ENCODE measurements at regions of chr2 and their contacts with region 1.

Region 1: DNA sequence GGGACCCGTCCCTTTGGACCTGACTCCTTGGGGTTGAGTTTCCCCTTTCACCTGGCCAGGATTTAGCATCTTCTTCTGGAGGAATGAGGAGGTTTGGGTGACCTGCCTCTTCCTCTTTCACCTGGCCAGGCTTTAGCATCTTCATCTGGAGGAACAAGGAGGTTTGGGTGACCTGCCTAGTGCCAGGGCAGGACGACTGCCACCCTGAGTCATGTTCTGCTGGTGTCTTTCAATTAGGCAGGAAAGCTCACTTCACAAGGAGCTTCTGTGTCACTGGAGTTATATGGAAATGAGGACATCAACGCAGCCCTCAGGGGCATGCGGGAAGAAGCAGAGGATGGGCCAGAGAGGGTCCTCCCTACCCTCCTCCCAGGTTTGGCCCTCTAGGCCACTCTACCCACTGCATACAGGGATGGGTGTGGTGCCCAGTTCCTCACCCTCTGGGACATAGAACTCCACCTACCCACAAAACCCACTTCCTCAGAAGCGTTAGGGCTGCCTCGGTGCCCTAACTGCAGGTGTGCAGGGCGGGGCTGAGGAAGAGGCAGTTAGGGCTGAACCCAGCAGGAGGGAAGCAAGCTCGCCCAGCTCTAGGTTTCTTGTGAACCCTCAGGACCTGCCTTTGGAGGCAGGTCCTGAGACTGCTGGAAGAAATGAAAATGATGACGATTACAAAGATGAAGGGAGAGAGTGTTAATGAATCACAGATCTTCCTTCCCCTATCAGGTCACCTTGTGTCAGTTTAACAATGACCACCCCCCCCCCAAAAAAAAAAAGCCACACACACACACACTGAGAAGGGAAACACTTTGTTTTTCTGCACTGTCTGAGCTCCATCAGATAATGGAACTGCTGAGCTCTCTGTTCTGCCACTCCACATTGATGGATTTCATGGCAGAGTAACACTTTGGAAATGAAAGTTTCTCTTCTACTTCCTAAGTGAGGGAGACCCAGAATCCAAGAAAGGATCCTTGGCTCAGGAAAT is 71.0 kb downstream of the ARL4C start:
- DNase-seq: peak; percentile 61 to 73 (median 72)
- H3K4me3 ChIP-seq: peak overlapping the region in 1 of 3 experiments; percentile 25
- H3K4me3 Mint-ChIP-seq: peak overlapping the region; percentile 12 to 59
- H3K27ac ChIP-seq: peak overlapping the region; percentile 91 to 92
- H3K27ac Mint-ChIP-seq: peak overlapping the region; percentile 92 to 98 (median 95)
- H3K4me1 ChIP-seq: peaks cover 62 to 72% of the 10 kb centered on the region in 2 donors
- H3K4me1 Mint-ChIP-seq: peaks cover 64% of the 10 kb centered on the region
- H3K27me3 ChIP-seq: no peaks in the 10 kb centered on the region
- H3K27me3 Mint-ChIP-seq: peaks cover 0 to 5% (median 1%) of the 10 kb centered on the region in 3 donors
- CTCF ChIP-seq: no peak

Region 2: GRCh38 chr2:234288974-234289455 is 136.9 kb before region 1 on chr2:
- intact Hi-C with region 1: loop called (anchors 5 kb)
- DNase-seq: peak; percentile 86 to 92 (median 87)
- H3K4me3 ChIP-seq: no peak overlapping the region
- H3K4me3 Mint-ChIP-seq: peak overlapping the region in 1 of 2 donors; percentile 51
- H3K27ac ChIP-seq: peak overlapping the region in 1 of 2 donors; percentile 93
- H3K27ac Mint-ChIP-seq: peak overlapping the region in 6 of 7 donors; percentile 80 to 98 (median 95)
- H3K4me1 ChIP-seq: peaks cover 40 to 45% of the 10 kb centered on the region in 2 donors
- H3K4me1 Mint-ChIP-seq: peaks cover 49% of the 10 kb centered on the region
- H3K27me3 ChIP-seq: no peaks in the 10 kb centered on the region
- H3K27me3 Mint-ChIP-seq: peaks cover 3 to 11% (median 5%) of the 10 kb centered on the region in 3 donors
- CTCF ChIP-seq: peak; percentile 91

Region 3: DNA sequence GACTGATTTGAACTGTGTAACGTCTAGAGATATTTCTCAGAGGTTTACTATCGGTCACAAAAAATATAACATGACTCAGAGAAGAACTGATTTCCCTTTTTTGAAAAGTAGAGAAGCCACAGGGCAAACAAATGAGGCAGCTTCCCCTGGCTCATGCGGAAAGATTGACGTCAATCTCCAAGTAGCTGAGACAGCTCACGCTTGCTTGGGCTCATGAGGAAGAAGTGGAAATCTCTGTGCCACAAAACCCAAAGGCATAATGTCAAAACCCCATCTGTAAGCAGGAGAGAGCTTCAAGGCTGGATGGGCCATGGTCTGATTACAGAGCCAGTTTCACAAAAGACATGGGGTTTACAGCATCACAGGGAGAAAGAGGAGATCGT is 117.1 kb before region 1 on chr2:
- intact Hi-C with region 1: loop called in 1 of 2 experiments (anchors 5 kb)
- DNase-seq: peak; percentile 93 to 96 (median 95)
- H3K4me3 ChIP-seq: no peak overlapping the region
- H3K4me3 Mint-ChIP-seq: peak overlapping the region in 1 of 2 donors; percentile 47
- H3K27ac ChIP-seq: peak overlapping the region; percentile 80 to 94
- H3K27ac Mint-ChIP-seq: peak overlapping the region; percentile 89 to 98 (median 96)
- H3K4me1 ChIP-seq: peaks cover 21 to 26% of the 10 kb centered on the region in 2 donors
- H3K4me1 Mint-ChIP-seq: peaks cover 35% of the 10 kb centered on the region
- H3K27me3 ChIP-seq: peaks cover 3 to 4% of the 10 kb centered on the region in 2 donors
- H3K27me3 Mint-ChIP-seq: peaks cover 2 to 16% (median 10%) of the 10 kb centered on the region in 3 donors
- CTCF ChIP-seq: no peak

Region 4: DNA sequence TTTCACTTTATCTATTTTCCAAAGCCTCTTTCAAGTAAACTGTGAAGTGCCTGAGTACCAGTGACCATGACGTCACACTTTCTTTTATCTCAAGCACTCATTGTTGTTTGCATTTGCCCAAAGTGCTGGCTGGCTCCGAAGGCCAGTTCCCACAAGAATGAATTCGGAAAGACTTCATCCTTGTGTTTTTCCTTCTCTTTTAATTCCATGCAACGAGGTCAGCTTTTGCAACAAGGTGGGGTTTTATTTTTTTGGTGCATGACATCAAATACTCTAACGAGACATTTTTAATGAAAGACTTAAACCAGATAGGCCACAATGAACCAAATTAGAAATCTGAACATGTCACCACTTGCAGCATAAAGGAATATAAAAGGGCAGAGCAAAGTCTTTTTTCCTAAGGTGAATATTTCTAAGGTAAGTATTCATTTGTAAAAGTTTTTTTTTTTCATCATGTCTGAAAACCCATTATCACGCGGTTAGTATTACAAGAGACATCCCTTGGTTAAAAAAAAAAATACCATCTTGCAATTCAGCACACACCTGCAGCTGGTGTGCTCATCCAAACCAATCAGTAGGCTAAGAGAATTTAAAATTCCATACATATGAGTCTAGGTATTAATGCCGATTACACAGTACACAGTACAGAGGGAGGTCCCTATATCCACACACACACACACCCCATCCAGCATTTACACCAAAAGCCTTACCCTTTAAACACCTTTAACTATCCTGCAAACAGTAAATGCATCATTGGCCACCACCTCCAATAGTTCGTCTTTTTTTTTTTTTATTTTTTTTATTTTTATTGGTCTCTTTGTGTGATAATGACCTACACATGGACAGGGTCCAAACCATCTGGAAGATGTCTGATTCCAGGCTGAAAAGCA is 68.7 kb after region 1 on chr2:
- intact Hi-C with region 1: loop called (anchors 5 to 10 kb)
- DNase-seq: peak in 1 of 3 donors; percentile 17
- H3K4me3 ChIP-seq: peak overlapping the region; percentile 48 to 92 (median 61)
- H3K4me3 Mint-ChIP-seq: peak overlapping the region; percentile 99
- H3K27ac ChIP-seq: peak overlapping the region in 1 of 2 donors; percentile 75
- H3K27ac Mint-ChIP-seq: peak overlapping the region in 2 of 7 donors; percentile 86 to 92
- H3K4me1 ChIP-seq: peaks cover 57 to 68% of the 10 kb centered on the region in 2 donors
- H3K4me1 Mint-ChIP-seq: peaks cover 47% of the 10 kb centered on the region
- H3K27me3 ChIP-seq: peaks cover 9 to 24% of the 10 kb centered on the region in 2 donors
- H3K27me3 Mint-ChIP-seq: peaks cover 31 to 41% (median 35%) of the 10 kb centered on the region in 3 donors
- CTCF ChIP-seq: no peak

Measured in CD14-positive monocyte (primary cell).